Activated CD8-positive, alpha-beta T cell treated with anti-CD3 and anti-CD28 coated beads for 36 hours (primary cell): ENCODE measurements at regions of chr2 and their contacts with region 1.

Region 1: DNA sequence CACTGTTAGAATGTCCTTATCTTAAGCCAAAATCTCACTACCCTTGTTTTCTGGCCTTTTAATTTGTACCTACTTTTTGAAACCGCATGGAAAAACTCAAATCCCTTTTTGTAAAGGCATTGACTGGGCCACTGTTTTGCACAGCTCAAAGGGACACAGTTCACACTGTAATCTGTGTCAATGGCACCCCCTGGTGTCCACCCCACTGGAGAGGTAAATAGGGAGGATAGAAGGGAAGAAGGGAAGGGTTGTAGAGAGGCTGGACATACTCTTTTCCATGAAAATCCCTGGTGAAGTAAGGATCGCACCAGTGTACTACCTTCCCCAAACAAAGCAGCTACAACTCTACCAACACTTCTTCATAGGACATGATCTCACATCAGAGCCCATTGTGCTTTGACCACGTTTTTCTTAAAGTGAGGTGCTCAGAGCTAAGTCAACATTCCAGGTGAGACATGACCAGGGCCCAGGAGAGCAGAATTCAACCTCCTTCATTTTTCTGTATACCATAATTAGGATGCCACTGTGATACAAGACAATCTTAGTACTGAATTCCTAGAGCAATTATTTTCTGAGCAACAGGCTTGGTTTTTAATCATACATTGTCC is 92.4 kb upstream of the RMDN2 start:
- DNase-seq: peak; percentile 92
- ATAC-seq: peak; percentile 86
- H3K4me3 Mint-ChIP-seq: no peak overlapping the region
- H3K27ac Mint-ChIP-seq: no peak overlapping the region
- H3K4me1 Mint-ChIP-seq: peaks cover 19% of the 10 kb centered on the region
- H3K27me3 Mint-ChIP-seq: no peaks in the 10 kb centered on the region
- CTCF ChIP-seq: peak; percentile 86

Region 2: GRCh38 chr2:37414470-37414949 is 418.2 kb before region 1 on chr2:
- CTCF ChIA-PET with region 1: interaction called, 46 read pairs
- POLR2A ChIA-PET with region 1: no interaction called
- intact Hi-C with region 1: loop called (anchors 1 kb)
- DNase-seq: no peak
- ATAC-seq: peak; percentile 53
- H3K4me3 Mint-ChIP-seq: no peak overlapping the region
- H3K27ac Mint-ChIP-seq: no peak overlapping the region
- H3K4me1 Mint-ChIP-seq: peaks cover 12% of the 10 kb centered on the region
- H3K27me3 Mint-ChIP-seq: no peaks in the 10 kb centered on the region
- CTCF ChIP-seq: peak; percentile 75

Region 3: GRCh38 chr2:37549598-37549997 is 283.1 kb before region 1 on chr2:
- CTCF ChIA-PET with region 1: interaction called, 10 read pairs
- POLR2A ChIA-PET with region 1: no interaction called
- intact Hi-C with region 1: loop called (anchors 5 kb)
- DNase-seq: no peak
- ATAC-seq: no peak
- H3K4me3 Mint-ChIP-seq: no peak overlapping the region
- H3K27ac Mint-ChIP-seq: no peak overlapping the region
- H3K4me1 Mint-ChIP-seq: peaks cover 23% of the 10 kb centered on the region
- H3K27me3 Mint-ChIP-seq: no peaks in the 10 kb centered on the region
- CTCF ChIP-seq: no peak

Region 4: DNA sequence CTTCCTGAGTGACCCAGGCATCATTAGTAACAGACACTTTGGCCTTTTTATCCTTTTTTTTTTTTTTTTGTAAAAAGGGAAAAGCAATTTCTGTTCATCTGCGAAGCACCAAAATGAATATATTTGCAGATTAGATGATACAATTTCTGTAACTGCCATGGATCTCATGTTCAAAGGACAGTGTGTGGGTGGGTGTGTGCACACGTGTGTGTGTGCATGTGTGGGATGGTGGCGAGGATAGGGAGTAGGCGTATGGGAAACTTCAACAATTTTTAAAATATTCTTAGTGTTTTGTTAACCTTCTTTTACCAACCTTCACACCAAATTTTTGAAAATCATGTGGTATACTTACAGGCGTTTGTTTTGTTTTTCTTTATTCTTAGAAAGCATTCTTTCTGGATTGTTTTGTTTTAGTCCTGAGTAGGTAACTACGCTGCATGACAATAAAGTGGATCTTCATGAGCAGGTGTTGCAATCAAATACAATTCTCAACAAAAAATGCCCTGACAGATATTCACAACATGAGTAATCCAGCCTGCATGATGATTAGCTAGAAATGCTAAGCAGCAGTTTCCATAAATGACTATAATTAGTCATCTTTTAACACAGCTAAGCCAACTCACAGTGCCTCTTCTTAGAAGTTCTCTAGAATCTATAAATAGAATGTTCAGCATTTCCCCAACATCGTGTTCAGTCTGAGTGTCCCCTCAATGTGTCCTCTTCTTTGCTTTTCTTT is 38.9 kb after region 1 on chr2:
- CTCF ChIA-PET with region 1: interaction called, 184 read pairs
- POLR2A ChIA-PET with region 1: interaction called, 3 read pairs
- intact Hi-C with region 1: loop called (anchors 5 kb)
- DNase-seq: no peak
- ATAC-seq: peak; percentile 92
- H3K4me3 Mint-ChIP-seq: peak overlapping the region; percentile 67
- H3K27ac Mint-ChIP-seq: peak overlapping the region; percentile 100
- H3K4me1 Mint-ChIP-seq: peaks cover 33% of the 10 kb centered on the region
- H3K27me3 Mint-ChIP-seq: peaks cover 2% of the 10 kb centered on the region
- CTCF ChIP-seq: no peak

Region 5: GRCh38 chr2:38057651-38058410 is 225.1 kb after region 1 on chr2:
- CTCF ChIA-PET with region 1: no interaction called
- POLR2A ChIA-PET with region 1: no interaction called
- intact Hi-C with region 1: no loop called
- DNase-seq: no peak
- ATAC-seq: peak; percentile 39
- H3K4me3 Mint-ChIP-seq: no peak overlapping the region
- H3K27ac Mint-ChIP-seq: no peak overlapping the region
- H3K4me1 Mint-ChIP-seq: peaks cover 20% of the 10 kb centered on the region
- H3K27me3 Mint-ChIP-seq: peaks cover 11% of the 10 kb centered on the region
- CTCF ChIP-seq: no peak